GM12878 (cell line): ENCODE measurements at regions of chr10 and their contacts with region 1.

Region 1: DNA sequence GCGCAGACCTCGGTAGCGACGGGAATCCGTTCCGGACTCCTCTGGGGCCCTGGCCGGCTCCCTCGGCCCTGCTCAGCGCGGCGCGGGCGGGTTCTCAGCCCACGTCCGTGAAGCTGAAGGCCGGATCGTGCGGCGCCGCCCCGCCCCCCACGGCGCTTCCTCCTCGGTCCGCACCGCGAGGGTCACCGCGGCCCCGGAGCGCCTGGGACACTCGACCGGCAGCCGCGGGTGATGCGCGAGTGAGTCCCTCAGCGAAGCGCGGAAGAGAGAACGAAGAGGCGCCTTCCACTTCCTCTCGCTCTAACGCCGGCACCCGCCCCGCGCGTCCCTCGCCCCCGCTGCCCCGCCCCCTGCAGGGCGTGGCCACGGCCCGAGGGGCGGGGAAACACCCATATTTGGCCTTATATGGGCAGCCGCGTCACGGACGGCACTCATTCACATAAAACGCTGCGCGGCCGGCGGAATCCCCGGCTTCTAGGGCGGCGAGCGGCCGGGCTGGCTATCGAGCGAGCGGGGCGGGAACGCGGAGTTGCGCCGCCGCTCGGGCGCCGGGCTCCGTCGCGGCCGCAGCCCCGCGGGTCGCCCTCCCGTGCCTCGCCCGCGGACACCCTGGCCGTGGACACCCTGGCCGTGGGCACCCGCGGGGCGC is at the start of gene DUSP5:
- DNase-seq: peak; percentile 75
- ATAC-seq: peak; percentile 51
- H3K4me3 ChIP-seq: peak within 1 kb of the TSS; percentile 95
- H3K27ac ChIP-seq: peak within 1 kb of the TSS; percentile 91
- H3K4me1 ChIP-seq: peaks cover 26% of the 10 kb centered on the region
- H3K27me3 ChIP-seq: no peaks in the 10 kb centered on the region
- CTCF ChIP-seq: no peak
- EP300 ChIP-seq: peak in 1 of 2 experiments; percentile 13; a peak in 2 of 4 replicates
- POLR2A ChIP-seq: peak; percentile 90
- RAD21 ChIP-seq: no peak
- polyA plus RNA-seq, gene DUSP5: 7.5 to 14.6 TPM

Region 2: GRCh38 chr10:110311357-110311949 is 186.1 kb before region 1 on chr10:
- CTCF ChIA-PET with region 1: interaction called, 29 read pairs
- POLR2A ChIA-PET with region 1: interaction called, 3 read pairs
- RAD21 ChIA-PET with region 1: interaction called, 28 read pairs
- SMC1A ChIA-PET with region 1: interaction called, 42 read pairs
- in situ Hi-C with region 1: no loop called
- intact Hi-C with region 1: loop called (anchors 1 kb)
- DNase-seq: peak; percentile 47
- ATAC-seq: peak; percentile 83
- H3K4me3 ChIP-seq: no peak overlapping the region
- H3K27ac ChIP-seq: no peak overlapping the region
- H3K4me1 ChIP-seq: 0 out of 2 replicates have a peak, but pooled peaks cover 2% of the 10 kb centered on the region
- H3K27me3 ChIP-seq: no peaks in the 10 kb centered on the region
- CTCF ChIP-seq: peak; percentile 62 to 76 (median 68); a peak in 5 of 6 replicates
- EP300 ChIP-seq: no peak
- POLR2A ChIP-seq: no peak
- RAD21 ChIP-seq: peak; percentile 96

Region 3: DNA sequence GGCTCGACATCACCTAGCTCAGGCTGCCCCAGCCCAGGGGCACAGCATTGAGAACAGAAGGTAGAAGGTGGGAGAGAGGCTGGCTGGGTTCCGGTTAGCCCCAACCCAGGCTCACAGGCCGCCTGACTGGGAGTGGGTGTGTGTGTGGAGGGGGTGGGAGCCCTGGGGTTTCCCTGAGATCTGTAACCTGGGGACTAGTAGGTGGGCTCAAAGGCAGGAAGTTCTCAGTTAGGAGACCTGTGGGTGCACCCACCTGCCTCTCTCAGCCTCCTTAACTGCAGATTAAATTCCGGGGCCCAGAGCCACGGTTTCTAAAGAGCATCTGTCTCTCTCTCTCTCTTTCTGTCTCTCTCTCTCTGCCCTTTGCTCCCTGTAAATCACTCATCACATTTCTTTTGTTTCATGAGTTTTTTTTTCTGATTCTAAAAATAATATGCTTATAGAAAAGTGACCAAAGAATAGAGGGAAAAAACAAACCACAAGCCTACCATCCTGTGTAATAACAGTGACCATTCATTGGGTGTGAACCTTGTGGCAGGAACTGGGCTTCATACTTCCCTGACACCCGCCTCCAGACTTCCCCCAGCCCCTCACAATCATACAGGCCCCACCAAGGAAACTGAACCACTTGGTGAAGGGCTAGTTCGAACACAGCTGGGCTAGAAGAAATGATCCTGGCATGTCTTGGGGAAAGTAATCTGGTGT is 109.4 kb before region 1 on chr10:
- CTCF ChIA-PET with region 1: interaction called, 3 read pairs
- POLR2A ChIA-PET with region 1: interaction called, 5 read pairs
- RAD21 ChIA-PET with region 1: interaction called, 6 read pairs
- SMC1A ChIA-PET with region 1: interaction called, 9 read pairs
- in situ Hi-C with region 1: no loop called
- intact Hi-C with region 1: loop called (anchors 1 kb)
- DNase-seq: peak; percentile 83
- ATAC-seq: peak; percentile 87
- H3K4me3 ChIP-seq: no peak overlapping the region
- H3K27ac ChIP-seq: peak overlapping the region; percentile 75
- H3K4me1 ChIP-seq: peaks cover 26% of the 10 kb centered on the region
- H3K27me3 ChIP-seq: no peaks in the 10 kb centered on the region
- CTCF ChIP-seq: no peak
- EP300 ChIP-seq: peak in 1 of 2 experiments; percentile 96; a peak in 3 of 4 replicates
- POLR2A ChIP-seq: no peak
- RAD21 ChIP-seq: peak; percentile 22; the same call in 1 of the 2 replicates

Region 4: DNA sequence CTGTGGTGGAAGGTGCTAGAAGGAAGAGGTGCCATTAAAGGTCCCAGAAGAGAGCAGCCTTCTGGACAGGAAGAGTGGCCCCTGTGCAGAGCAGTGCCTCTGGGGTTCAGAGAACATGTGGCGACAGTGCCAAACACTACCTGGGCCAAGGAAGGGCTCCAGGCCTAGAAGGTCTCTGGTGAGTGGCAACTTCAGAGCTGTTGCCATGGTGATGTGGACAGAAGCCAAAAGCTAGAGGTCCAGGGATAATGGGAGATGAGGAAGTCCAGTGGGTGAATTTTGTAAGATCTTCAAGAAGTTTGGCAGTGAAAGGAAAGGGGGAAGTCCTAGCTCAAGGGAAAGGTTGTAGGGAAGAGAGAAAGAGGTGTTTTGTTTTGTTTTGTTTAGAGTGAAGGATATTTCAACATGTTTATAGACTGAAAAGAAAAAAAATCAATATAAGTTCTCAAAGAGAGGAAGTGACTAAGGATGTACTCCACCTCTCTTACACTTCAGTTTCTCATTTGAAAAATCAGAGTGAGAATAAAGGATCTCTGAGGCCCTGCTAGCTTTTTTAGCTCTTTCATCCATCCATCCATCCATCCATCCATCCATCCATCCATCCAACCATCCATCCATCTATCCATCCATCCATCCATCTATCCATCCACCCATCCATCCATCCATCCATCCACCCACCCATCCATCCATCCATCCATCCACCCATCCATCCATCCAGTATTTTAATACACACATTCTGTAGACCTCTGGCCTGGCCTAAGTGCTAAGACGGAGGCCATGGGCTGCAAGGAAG is 77.0 kb before region 1 on chr10:
- CTCF ChIA-PET with region 1: interaction called, 16 read pairs
- POLR2A ChIA-PET with region 1: interaction called, 94 read pairs
- RAD21 ChIA-PET with region 1: interaction called, 181 read pairs
- SMC1A ChIA-PET with region 1: interaction called, 154 read pairs
- in situ Hi-C with region 1: no loop called
- intact Hi-C with region 1: no loop called
- DNase-seq: no peak
- ATAC-seq: no peak
- H3K4me3 ChIP-seq: no peak overlapping the region
- H3K27ac ChIP-seq: peak overlapping the region; percentile 49
- H3K4me1 ChIP-seq: peaks cover 74% of the 10 kb centered on the region
- H3K27me3 ChIP-seq: no peaks in the 10 kb centered on the region
- CTCF ChIP-seq: no peak
- EP300 ChIP-seq: no peak
- POLR2A ChIP-seq: no peak
- RAD21 ChIP-seq: no peak

Region 5: GRCh38 chr10:110481934-110482333 is 15.6 kb before region 1 on chr10:
- CTCF ChIA-PET with region 1: interaction called, 20 read pairs
- POLR2A ChIA-PET with region 1: interaction called, 4 read pairs
- RAD21 ChIA-PET with region 1: interaction called, 4 read pairs
- SMC1A ChIA-PET with region 1: interaction called, 14 read pairs
- in situ Hi-C with region 1: no loop called
- intact Hi-C with region 1: no loop called
- DNase-seq: no peak
- ATAC-seq: no peak
- H3K4me3 ChIP-seq: no peak overlapping the region
- H3K27ac ChIP-seq: no peak overlapping the region
- H3K4me1 ChIP-seq: peaks cover 5% of the 10 kb centered on the region
- H3K27me3 ChIP-seq: no peaks in the 10 kb centered on the region
- CTCF ChIP-seq: no peak
- EP300 ChIP-seq: no peak
- POLR2A ChIP-seq: no peak
- RAD21 ChIP-seq: no peak

Region 6: GRCh38 chr10:110547139-110547761 is 49.7 kb after region 1 on chr10:
- CTCF ChIA-PET with region 1: interaction called, 44 read pairs
- POLR2A ChIA-PET with region 1: interaction called, 5 read pairs
- RAD21 ChIA-PET with region 1: interaction called, 62 read pairs
- SMC1A ChIA-PET with region 1: interaction called, 81 read pairs
- in situ Hi-C with region 1: no loop called
- intact Hi-C with region 1: loop called (anchors 1 kb)
- DNase-seq: no peak
- ATAC-seq: peak; percentile 89
- H3K4me3 ChIP-seq: no peak overlapping the region
- H3K27ac ChIP-seq: no peak overlapping the region
- H3K4me1 ChIP-seq: peaks cover 5% of the 10 kb centered on the region; the same call in 1 of the 2 replicates
- H3K27me3 ChIP-seq: peaks cover 0 to 2% of the 10 kb centered on the region in 2 experiments; a peak in 1 of 4 replicates
- CTCF ChIP-seq: peak; percentile 72 to 83 (median 73)
- EP300 ChIP-seq: no peak
- POLR2A ChIP-seq: no peak
- RAD21 ChIP-seq: peak; percentile 95